A549 (cell line): ENCODE measurements at regions of chr4 and their contacts with region 1.

Region 1: GRCh38 chr4:1167247-1167949 is 5.0 kb downstream of the SPON2 start:
- DNase-seq: peak; percentile 35 to 39
- ATAC-seq: peak; percentile 79 to 93
- H3K4me3 ChIP-seq: no peak overlapping the region
- H3K27ac ChIP-seq: peak overlapping the region in 1 of 2 experiments; percentile 63; a peak in 2 of 6 replicates
- H3K4me1 ChIP-seq: peaks cover 4% of the 10 kb centered on the region; the same call in 1 of the 3 replicates
- CTCF ChIP-seq: peak; percentile 67
- EP300 ChIP-seq: no peak
- POLR2A ChIP-seq: no peak
- RAD21 ChIP-seq: peak; percentile 62 to 71

Region 2: DNA sequence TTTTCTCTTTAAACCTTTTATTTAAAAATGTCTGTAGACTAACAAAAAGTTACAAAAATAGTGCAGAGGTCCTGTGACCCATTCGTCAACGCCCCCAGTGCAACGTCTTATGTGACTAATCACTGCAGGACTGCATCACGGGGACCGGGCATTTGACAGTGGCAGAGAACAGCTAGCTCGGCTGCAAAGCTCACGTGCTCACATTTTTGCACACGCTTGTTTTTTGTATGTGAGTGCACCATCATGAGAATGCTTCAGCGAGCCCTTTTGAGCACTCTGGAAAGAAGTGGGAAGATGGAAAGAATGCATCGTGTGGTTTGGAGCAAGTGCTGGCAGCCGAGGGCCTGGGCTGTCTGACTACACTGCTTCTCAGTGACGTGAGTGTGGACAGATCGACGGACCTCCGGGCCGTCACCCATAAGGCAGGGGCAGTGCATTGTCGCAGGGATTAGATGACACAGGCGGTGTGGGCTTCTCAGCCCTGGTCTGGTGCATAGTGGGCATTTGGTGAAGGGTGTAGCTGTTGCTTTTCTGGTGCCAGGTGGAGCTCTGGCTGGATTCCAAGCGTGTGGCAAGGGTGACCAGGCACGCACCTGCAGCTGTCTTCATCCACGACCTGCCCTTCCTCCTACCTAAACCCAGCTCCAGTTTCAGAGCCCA is 12.7 kb before region 1 on chr4:
- CTCF ChIA-PET with region 1: interaction called, 12 read pairs
- POLR2A ChIA-PET with region 1: no interaction called
- DNase-seq: no peak
- ATAC-seq: no peak
- H3K4me3 ChIP-seq: no peak overlapping the region
- H3K27ac ChIP-seq: no peak overlapping the region
- H3K4me1 ChIP-seq: no peaks in the 10 kb centered on the region
- CTCF ChIP-seq: no peak
- EP300 ChIP-seq: no peak
- POLR2A ChIP-seq: no peak
- RAD21 ChIP-seq: no peak

Region 3: GRCh38 chr4:1178300-1179088 is 11.1 kb after region 1 on chr4:
- CTCF ChIA-PET with region 1: interaction called, 15 read pairs
- POLR2A ChIA-PET with region 1: no interaction called
- DNase-seq: no peak
- ATAC-seq: no peak
- H3K4me3 ChIP-seq: no peak overlapping the region
- H3K27ac ChIP-seq: no peak overlapping the region
- H3K4me1 ChIP-seq: peaks cover 9% of the 10 kb centered on the region
- CTCF ChIP-seq: no peak
- EP300 ChIP-seq: no peak
- POLR2A ChIP-seq: no peak
- RAD21 ChIP-seq: no peak